BJ (cell line): ENCODE measurements at regions of chr11 and their contacts with region 1.

Region 1: GRCh38 chr11:70317581-70318305 is 47.3 kb downstream of the PPFIA1 start:
- DNase-seq: no peak
- H3K4me3 ChIP-seq: no peak overlapping the region
- H3K27me3 ChIP-seq: no peaks in the 10 kb centered on the region
- CTCF ChIP-seq: no peak

Region 2: DNA sequence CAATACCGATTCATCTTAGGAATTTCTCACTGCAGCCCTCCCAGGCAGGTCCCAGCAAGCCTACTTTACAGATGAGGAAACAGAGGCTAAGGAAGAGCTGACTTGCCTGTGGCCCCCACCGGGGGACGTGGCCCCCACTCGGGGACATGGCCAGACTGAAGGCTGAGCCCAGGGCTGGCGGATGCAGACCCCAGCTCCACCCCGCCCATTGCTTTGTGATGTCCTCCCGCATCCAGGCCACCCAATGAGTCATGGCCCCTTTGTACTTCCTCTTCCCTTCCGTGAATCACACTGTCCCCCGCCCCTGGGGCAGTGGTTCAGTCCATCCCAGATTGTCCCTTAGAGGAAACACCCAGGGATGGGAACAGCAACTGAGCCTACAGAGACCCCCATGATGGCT is 355.6 kb before region 1 on chr11:
- CTCF ChIA-PET with region 1: no interaction called
- POLR2A ChIA-PET with region 1: no interaction called
- DNase-seq: no peak
- H3K4me3 ChIP-seq: no peak overlapping the region
- H3K27me3 ChIP-seq: no peaks in the 10 kb centered on the region; the same call in 1 of the 2 replicates
- CTCF ChIP-seq: no peak

Region 3: GRCh38 chr11:70303070-70303469 is 14.7 kb before region 1 on chr11:
- CTCF ChIA-PET with region 1: no interaction called
- POLR2A ChIA-PET with region 1: interaction called, 10 read pairs
- DNase-seq: peak; percentile 50
- H3K4me3 ChIP-seq: no peak overlapping the region
- H3K27me3 ChIP-seq: no peaks in the 10 kb centered on the region
- CTCF ChIP-seq: no peak

Region 4: GRCh38 chr11:70423523-70424505 is 106.1 kb after region 1 on chr11:
- CTCF ChIA-PET with region 1: no interaction called
- POLR2A ChIA-PET with region 1: no interaction called
- DNase-seq: peak; percentile 31
- H3K4me3 ChIP-seq: no peak overlapping the region
- H3K27me3 ChIP-seq: no peaks in the 10 kb centered on the region
- CTCF ChIP-seq: no peak